CD4-positive, alpha-beta memory T cell (primary cell): ENCODE measurements at regions of chrX and their contacts with region 1.

Region 1: GRCh38 chrX:115632455-115632854 is 71.5 kb downstream of the PLS3 start:
- DNase-seq: no peak
- H3K4me3 ChIP-seq: no peak overlapping the region
- H3K4me3 Mint-ChIP-seq: no peak overlapping the region
- H3K27ac ChIP-seq: no peak overlapping the region
- H3K27ac Mint-ChIP-seq: no peak overlapping the region
- H3K4me1 ChIP-seq: no peaks in the 10 kb centered on the region
- H3K4me1 Mint-ChIP-seq: no peaks in the 10 kb centered on the region
- H3K27me3 ChIP-seq: no peaks in the 10 kb centered on the region
- H3K27me3 Mint-ChIP-seq: no peaks in the 10 kb centered on the region

Region 2: DNA sequence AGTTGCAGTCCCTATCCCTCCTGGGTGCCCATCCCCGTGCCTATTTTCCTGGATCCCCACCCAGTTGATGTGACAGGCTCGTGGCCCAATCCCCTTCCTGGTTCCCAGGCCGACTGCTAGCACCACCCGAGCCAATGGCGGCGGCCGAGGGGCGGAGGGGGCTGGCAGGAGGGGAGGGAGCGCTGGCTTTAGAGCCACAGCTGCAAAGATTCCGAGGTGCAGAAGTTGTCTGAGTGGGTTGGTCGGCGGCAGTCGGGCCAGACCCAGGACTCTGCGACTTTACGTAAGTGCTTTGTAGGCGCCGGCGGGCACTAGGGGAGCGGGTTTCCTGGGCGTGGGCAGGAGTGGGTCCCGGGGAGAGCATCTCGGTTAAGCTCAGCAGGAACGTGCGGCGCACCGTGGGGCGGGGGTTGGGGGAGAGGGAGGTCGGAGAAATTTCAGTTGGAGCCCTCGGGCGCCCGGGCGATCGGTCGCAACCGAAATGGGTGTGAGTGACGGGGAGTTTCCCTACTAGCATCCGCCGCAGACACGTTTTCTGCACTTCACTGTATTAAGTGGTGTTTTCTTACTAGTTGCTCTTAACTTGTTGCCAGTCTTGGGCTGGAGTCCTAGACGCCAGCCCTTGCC is 71.4 kb before region 1 on chrX and contains the start of gene PLS3:
- CTCF ChIA-PET with region 1: no interaction called
- POLR2A ChIA-PET with region 1: no interaction called
- intact Hi-C with region 1: no loop called
- DNase-seq: no peak
- H3K4me3 ChIP-seq: no peak within 1 kb of the TSS
- H3K4me3 Mint-ChIP-seq: peak within 1 kb of the TSS in 5 of 8 donors; percentile 32 to 72 (median 41)
- H3K27ac ChIP-seq: no peak within 1 kb of the TSS
- H3K27ac Mint-ChIP-seq: peak within 1 kb of the TSS in 2 of 7 donors; percentile 35 to 41
- H3K4me1 ChIP-seq: no peaks in the 10 kb centered on the region
- H3K4me1 Mint-ChIP-seq: peaks cover 0 to 5% (median 0%) of the 10 kb centered on the region in 4 donors
- H3K27me3 ChIP-seq: no peaks in the 10 kb centered on the region
- H3K27me3 Mint-ChIP-seq: peaks cover 0 to 4% of the 10 kb centered on the region in 2 donors
- total RNA-seq, gene PLS3: 0.14 to 0.15 TPM

Region 3: GRCh38 chrX:115642895-115643530 is 10.6 kb after region 1 on chrX:
- CTCF ChIA-PET with region 1: interaction called, 12 read pairs
- POLR2A ChIA-PET with region 1: no interaction called
- intact Hi-C with region 1: no loop called
- DNase-seq: peak in 4 of 5 donors; percentile 35 to 45 (median 42)
- H3K4me3 ChIP-seq: no peak overlapping the region
- H3K4me3 Mint-ChIP-seq: no peak overlapping the region
- H3K27ac ChIP-seq: no peak overlapping the region
- H3K27ac Mint-ChIP-seq: no peak overlapping the region
- H3K4me1 ChIP-seq: no peaks in the 10 kb centered on the region
- H3K4me1 Mint-ChIP-seq: no peaks in the 10 kb centered on the region
- H3K27me3 ChIP-seq: no peaks in the 10 kb centered on the region
- H3K27me3 Mint-ChIP-seq: peaks cover 0 to 4% of the 10 kb centered on the region in 2 donors